ENCODE measurements at regions of chr1 and their contacts with region 1.

Region 1: GRCh38 chr1:160997323-160998038 is 23.5 kb downstream of the F11R start:
- DNase-seq: peak; percentile 64
- ATAC-seq: peak; percentile 86
- H3K4me3 ChIP-seq: no peak overlapping the region
- H3K27ac ChIP-seq: no peak overlapping the region
- H3K4me1 ChIP-seq: no peaks in the 10 kb centered on the region
- H3K27me3 ChIP-seq: no peaks in the 10 kb centered on the region
- CTCF ChIP-seq: peak; percentile 65
- POLR2A ChIP-seq: no peak
- RAD21 ChIP-seq: peak; percentile 62

Region 2: GRCh38 chr1:161098210-161099068 is 101.0 kb after region 1 on chr1 and contains the start of gene KLHDC9:
- CTCF ChIA-PET with region 1: interaction called, 23 read pairs
- POLR2A ChIA-PET with region 1: no interaction called
- dilution Hi-C with region 1: no loop called
- in situ Hi-C with region 1: loop called (anchors 5 kb)
- intact Hi-C with region 1: loop called (anchors 1 kb)
- DNase-seq: peak; percentile 54
- ATAC-seq: peak; percentile 73
- H3K4me3 ChIP-seq: peak within 1 kb of the TSS; percentile 43
- H3K27ac ChIP-seq: no peak within 1 kb of the TSS
- H3K4me1 ChIP-seq: peaks cover 5% of the 10 kb centered on the region; the same call in 1 of the 2 replicates
- H3K27me3 ChIP-seq: no peaks in the 10 kb centered on the region
- CTCF ChIP-seq: no peak
- POLR2A ChIP-seq: no peak
- RAD21 ChIP-seq: no peak
- total RNA-seq, gene KLHDC9: 0.18 TPM in 1 of 2 replicates, not detected in the other

Region 3: GRCh38 chr1:161139765-161140164 is 142.3 kb after region 1 on chr1:
- CTCF ChIA-PET with region 1: interaction called, 3 read pairs
- POLR2A ChIA-PET with region 1: no interaction called
- dilution Hi-C with region 1: no loop called
- in situ Hi-C with region 1: no loop called
- intact Hi-C with region 1: loop called (anchors 1 kb)
- DNase-seq: peak; percentile 57
- ATAC-seq: peak; percentile 60
- H3K4me3 ChIP-seq: no peak overlapping the region
- H3K27ac ChIP-seq: no peak overlapping the region
- H3K4me1 ChIP-seq: no peaks in the 10 kb centered on the region
- H3K27me3 ChIP-seq: no peaks in the 10 kb centered on the region
- CTCF ChIP-seq: peak; percentile 64
- POLR2A ChIP-seq: no peak
- RAD21 ChIP-seq: peak; percentile 66